Activated CD4-positive, alpha-beta T cell treated with anti-CD3 and anti-CD28 coated beads, Interleukin-2, amount 10 ng/mL, durations not matched to agents 24 days and 14 days (primary cell): ENCODE measurements at regions of chr17 and their contacts with region 1.

Region 1: GRCh38 chr17:38898812-38899348 is 26.5 kb upstream of the LASP1NB start:
- DNase-seq: peak; percentile 93
- H3K4me3 Mint-ChIP-seq: peak overlapping the region; percentile 75
- H3K27ac Mint-ChIP-seq: peak overlapping the region; percentile 91
- H3K4me1 Mint-ChIP-seq: peaks cover 46% of the 10 kb centered on the region
- H3K27me3 Mint-ChIP-seq: no peaks in the 10 kb centered on the region

Region 2: DNA sequence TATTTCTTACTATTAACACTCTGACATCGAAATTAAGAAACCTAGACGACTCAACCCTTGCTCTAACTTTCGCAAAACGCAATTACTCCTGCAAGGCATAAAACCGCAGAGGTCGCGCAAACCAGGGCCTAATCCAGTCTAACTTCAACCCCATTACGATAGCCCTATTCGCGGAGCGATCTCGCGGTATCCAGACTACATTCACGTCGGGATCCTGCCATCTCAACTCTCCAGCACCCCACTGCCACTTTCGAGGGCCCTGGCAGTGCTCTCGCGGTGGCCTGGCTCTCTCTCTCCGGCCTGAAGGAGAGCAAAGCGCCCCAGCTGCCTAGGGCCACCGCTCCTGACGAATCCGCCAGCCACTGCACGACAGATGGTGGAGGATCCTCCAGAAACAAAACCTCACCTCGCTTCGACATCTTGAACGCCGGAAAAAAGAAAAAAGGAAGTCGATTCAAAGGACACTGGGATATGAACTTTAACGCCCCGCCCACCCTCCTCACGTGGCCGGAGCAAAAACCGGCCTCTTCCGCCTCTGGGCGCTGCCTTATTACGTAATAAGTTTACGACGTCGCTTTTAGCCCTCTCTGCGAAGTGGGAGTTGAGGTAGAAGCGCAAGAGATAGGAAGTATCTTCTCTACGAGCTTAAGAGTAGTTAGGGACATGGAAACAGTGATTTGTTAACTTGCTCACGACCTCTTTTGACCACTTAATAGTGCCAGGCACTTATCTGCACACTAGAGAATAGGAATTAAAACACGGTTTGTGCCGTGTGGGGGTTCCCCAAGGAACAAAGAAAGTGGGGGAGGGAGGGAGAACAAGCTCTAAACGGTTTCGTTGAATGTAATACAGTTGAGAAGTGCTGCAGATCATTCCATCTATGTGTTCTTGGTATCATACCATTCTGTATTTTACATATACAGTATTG is 45.3 kb before region 1 on chr17 and contains the start of gene RPL23:
- intact Hi-C with region 1: loop called (anchors 2 kb)
- DNase-seq: peak; percentile 97
- H3K4me3 Mint-ChIP-seq: peak within 1 kb of the TSS; percentile 91
- H3K27ac Mint-ChIP-seq: peak within 1 kb of the TSS; percentile 98
- H3K4me1 Mint-ChIP-seq: peaks cover 30% of the 10 kb centered on the region
- H3K27me3 Mint-ChIP-seq: no peaks in the 10 kb centered on the region
- total RNA-seq, gene RPL23: 1,994 and 2,005 TPM in 2 replicates

Region 3: GRCh38 chr17:38925263-38925995 is 26.5 kb after region 1 on chr17 and contains the start of gene LASP1NB:
- intact Hi-C with region 1: loop called (anchors 2 kb)
- DNase-seq: peak; percentile 79
- H3K4me3 Mint-ChIP-seq: peak within 1 kb of the TSS; percentile 0
- H3K27ac Mint-ChIP-seq: peak within 1 kb of the TSS; percentile 14
- H3K4me1 Mint-ChIP-seq: peaks cover 28% of the 10 kb centered on the region
- H3K27me3 Mint-ChIP-seq: no peaks in the 10 kb centered on the region